ENCODE measurements at regions of chr13 and their contacts with region 1.

Region 1: GRCh38 chr13:28408235-28408848 is 86.6 kb downstream of the FLT1 start:
- DNase-seq: peak; percentile 100
- H3K4me3 ChIP-seq: peak overlapping the region in 1 of 3 experiments; percentile 10
- H3K27ac ChIP-seq: peak overlapping the region; percentile 97
- H3K4me1 ChIP-seq: peaks cover 53% of the 10 kb centered on the region
- H3K27me3 ChIP-seq: no peaks in the 10 kb centered on the region
- CTCF ChIP-seq: no peak
- POLR2A ChIP-seq: peak; percentile 86

Region 2: DNA sequence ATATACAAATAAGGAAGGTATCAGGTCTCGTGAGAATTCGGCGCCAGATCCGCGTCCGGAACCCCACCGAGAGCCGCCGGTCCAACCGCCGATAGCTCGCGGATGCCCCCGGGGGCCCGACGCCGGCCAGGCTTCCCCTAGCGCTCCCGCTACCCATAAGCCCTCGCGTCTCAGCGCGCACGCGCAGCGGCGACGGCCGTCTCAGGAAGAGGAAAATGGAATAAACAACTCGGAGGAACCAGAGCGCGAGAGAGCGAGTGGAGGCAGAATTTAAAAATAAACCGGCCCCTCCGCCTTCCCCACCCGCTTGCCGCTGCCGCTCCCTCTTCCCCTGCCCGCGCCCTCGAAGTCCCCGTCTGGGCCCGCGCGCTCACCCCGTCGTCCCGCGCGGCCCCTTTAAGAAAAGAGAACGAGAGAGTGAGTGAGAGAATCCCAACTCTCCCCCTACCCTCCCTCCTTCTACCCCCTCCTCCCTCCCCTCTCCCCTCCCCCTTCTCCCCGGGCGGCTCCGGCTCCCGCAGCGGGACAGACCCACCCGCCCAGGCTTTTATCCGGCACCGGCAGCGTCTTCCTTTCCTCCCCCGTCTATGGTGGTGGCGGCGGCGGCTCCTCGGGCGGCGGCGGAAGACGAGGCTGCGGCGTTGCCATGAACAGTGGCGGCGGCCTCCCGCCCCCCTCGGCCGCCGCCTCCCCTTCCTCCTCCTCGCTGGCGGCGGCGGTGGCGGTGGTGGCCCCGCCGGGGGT is 270.2 kb before region 1 on chr13 and contains the start of gene PAN3:
- CTCF ChIA-PET with region 1: no interaction called
- POLR2A ChIA-PET with region 1: no interaction called
- dilution Hi-C with region 1: no loop called
- intact Hi-C with region 1: loop called (anchors 2 kb)
- DNase-seq: peak; percentile 92
- H3K4me3 ChIP-seq: peak within 1 kb of the TSS; percentile 78 to 100 (median 99)
- H3K27ac ChIP-seq: peak within 1 kb of the TSS; percentile 93
- H3K4me1 ChIP-seq: peaks cover 20% of the 10 kb centered on the region
- H3K27me3 ChIP-seq: no peaks in the 10 kb centered on the region
- CTCF ChIP-seq: no peak
- POLR2A ChIP-seq: peak; percentile 91
- total RNA-seq, gene PAN3: 31.6 and 31.9 TPM in 2 replicates

Region 3: GRCh38 chr13:28337166-28338005 is 71.0 kb before region 1 on chr13:
- CTCF ChIA-PET with region 1: interaction called, 4 read pairs
- POLR2A ChIA-PET with region 1: no interaction called
- dilution Hi-C with region 1: no loop called
- intact Hi-C with region 1: loop called (anchors 2 kb)
- DNase-seq: peak; percentile 97
- H3K4me3 ChIP-seq: no peak overlapping the region
- H3K27ac ChIP-seq: peak overlapping the region; percentile 80
- H3K4me1 ChIP-seq: peaks cover 74% of the 10 kb centered on the region
- H3K27me3 ChIP-seq: no peaks in the 10 kb centered on the region
- CTCF ChIP-seq: no peak
- POLR2A ChIP-seq: no peak

Region 4: DNA sequence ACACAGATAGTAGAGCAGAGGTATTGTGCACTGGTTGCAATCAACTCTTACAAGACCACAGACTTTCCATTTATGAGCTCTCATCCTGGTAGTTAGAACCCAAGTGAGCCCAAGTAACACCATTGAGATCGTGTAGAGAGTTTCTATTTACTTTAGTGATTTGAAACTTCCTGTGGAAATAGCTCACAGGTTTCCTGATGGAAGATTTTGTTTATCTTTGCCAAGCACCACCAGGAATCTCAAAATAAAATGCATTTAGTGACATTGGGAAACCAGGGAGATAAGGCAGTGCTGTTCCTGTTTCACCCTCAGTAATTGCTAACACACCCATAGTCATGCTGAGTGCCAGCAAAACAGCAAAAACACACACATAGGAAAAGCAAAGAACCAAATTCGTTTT is 15.9 kb before region 1 on chr13:
- CTCF ChIA-PET with region 1: interaction called, 13 read pairs
- POLR2A ChIA-PET with region 1: interaction called, 6 read pairs
- dilution Hi-C with region 1: no loop called
- intact Hi-C with region 1: loop called (anchors 1 kb)
- DNase-seq: peak; percentile 91
- H3K4me3 ChIP-seq: no peak overlapping the region
- H3K27ac ChIP-seq: peak overlapping the region; percentile 88
- H3K4me1 ChIP-seq: peaks cover 89% of the 10 kb centered on the region
- H3K27me3 ChIP-seq: no peaks in the 10 kb centered on the region
- CTCF ChIP-seq: no peak
- POLR2A ChIP-seq: no peak

Region 5: GRCh38 chr13:28489524-28489931 is 81.2 kb after region 1 on chr13:
- CTCF ChIA-PET with region 1: interaction called, 7 read pairs
- POLR2A ChIA-PET with region 1: interaction called, 12 read pairs
- dilution Hi-C with region 1: no loop called
- intact Hi-C with region 1: loop called (anchors 2 kb)
- DNase-seq: peak; percentile 55
- H3K4me3 ChIP-seq: no peak overlapping the region
- H3K27ac ChIP-seq: peak overlapping the region; percentile 76
- H3K4me1 ChIP-seq: peaks cover 46% of the 10 kb centered on the region
- H3K27me3 ChIP-seq: no peaks in the 10 kb centered on the region
- CTCF ChIP-seq: no peak
- POLR2A ChIP-seq: no peak

Region 6: DNA sequence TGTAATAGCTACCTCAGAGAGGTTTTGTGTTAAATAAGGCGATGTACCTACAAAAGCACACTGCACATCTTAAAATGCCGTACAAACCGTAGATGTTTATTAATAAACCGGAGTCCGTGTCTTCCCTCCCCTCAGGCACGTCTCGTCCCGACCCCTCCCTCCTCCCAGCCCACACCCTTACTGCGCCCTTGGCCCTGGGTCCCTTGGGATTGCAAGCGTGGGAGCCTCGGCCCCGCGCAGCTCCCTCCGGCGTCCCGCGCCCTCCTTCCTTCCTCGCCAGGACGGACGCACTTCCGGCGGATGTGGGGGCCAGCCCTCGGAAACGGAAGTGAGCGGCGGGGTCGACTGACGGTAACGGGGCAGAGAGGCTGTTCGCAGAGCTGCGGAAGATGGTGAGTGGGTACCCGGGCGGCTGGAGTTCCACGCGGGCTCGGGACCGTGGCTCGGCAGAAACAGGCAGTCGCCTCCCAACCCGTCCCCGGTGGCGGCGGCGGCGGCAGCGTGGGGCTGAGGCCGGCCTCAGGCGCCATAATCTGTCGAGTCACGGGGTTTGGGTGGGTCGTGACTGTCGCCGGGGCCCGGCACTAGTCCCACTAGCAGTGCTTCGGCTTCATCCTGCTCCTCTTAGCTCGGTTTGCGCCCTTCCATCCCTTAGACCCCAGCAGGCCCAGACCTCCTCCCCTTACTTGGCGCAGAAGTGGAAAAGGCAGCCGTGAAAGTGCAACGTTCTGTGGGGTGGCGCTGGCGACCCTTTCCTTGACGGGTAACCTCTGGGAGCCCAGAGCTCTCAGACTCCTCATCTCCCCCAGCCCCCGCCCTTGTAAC is 250.7 kb after region 1 on chr13 and contains the start of gene POMP:
- CTCF ChIA-PET with region 1: no interaction called
- POLR2A ChIA-PET with region 1: no interaction called
- dilution Hi-C with region 1: no loop called
- intact Hi-C with region 1: loop called (anchors 2 kb)
- DNase-seq: peak; percentile 91
- H3K4me3 ChIP-seq: peak within 1 kb of the TSS; percentile 90 to 96 (median 96)
- H3K27ac ChIP-seq: peak within 1 kb of the TSS; percentile 99
- H3K4me1 ChIP-seq: peaks cover 20% of the 10 kb centered on the region
- H3K27me3 ChIP-seq: no peaks in the 10 kb centered on the region
- CTCF ChIP-seq: no peak
- POLR2A ChIP-seq: peak; percentile 43
- total RNA-seq, gene POMP: 88.9 and 105 TPM in 2 replicates

Measured in endothelial cell of umbilical vein (primary cell).